Adrenal gland (tissue), 19 donors: ENCODE measurements at regions of chr20 and their contacts with region 1.

Region 1: DNA sequence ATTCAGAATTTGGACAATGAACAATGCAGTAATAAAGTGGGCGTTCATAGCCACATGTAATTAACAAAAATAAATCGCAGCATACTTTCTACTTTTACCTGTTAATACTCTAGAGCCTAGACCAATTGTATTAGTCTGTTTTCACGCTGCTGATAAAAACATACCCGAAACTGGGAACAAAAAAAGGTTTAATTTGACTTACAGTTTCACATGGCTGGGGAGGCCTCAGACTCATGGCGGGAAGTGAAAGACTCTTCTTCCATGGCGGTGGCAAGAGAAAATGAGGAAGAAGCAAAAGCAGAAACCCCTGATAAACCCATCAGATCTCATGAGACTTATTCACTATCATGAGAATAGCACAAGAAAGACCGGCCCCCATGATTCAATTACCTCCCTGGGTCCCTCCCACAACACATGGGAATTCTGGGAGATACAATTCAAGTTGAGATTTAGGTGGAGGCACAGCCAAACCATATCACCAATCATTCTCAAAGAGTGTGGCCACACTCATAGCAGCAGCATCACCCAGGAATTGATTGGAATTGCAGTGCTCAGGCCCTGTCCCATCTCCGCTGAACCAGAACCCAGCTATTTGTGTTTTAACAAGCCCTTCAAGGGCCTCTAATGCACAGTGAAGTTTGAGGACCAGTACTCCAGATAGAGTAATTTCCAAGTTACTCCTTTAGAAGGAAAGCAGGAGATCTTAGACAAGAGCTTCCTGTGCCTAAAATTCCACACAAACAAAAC is 650.0 kb downstream of the KIF16B start:
- DNase-seq: peak in 1 of 7 donors; percentile 4
- H3K4me3 ChIP-seq: no peak overlapping the region
- H3K27ac ChIP-seq: no peak overlapping the region
- H3K4me1 ChIP-seq: no peaks in the 10 kb centered on the region
- H3K27me3 ChIP-seq: no peaks in the 10 kb centered on the region
- CTCF ChIP-seq: no peak
- POLR2A ChIP-seq: no peak

Region 2: DNA sequence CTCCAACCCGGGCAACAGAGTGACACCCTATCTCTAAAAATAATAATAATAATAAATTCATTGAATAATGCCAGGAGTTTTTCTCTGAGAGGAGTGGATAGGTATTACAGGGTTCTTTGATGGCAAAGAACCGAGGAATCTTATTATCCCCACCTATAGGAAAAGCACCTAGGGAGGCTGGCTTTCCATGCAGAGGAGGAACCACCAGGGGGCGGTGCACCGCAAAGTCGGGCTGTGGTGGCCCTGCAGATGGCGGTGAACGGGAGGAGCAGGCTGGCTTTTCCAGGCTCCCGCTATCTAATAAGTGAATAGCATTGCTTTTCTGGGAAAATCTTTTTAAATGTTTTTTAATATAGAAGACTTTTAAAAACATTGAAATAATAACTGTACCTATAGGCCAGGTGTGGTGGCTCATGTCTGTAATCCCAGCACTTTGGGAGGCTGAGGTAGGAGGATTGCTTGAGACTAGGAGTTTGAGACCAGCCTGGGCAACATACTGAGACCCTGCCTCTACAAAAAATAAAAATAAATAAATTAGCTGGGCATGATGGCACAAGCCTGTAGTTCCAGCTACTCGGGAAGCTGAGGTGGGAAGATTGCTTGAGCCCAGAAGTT is 214.1 kb before region 1 on chr20:
- intact Hi-C with region 1: loop called in 1 of 2 experiments (anchors 10 kb)
- DNase-seq: peak; percentile 55 to 80 (median 64)
- H3K4me3 ChIP-seq: no peak overlapping the region
- H3K27ac ChIP-seq: no peak overlapping the region
- H3K4me1 ChIP-seq: no peaks in the 10 kb centered on the region
- H3K27me3 ChIP-seq: no peaks in the 10 kb centered on the region
- CTCF ChIP-seq: peak; percentile 38 to 65 (median 62)
- POLR2A ChIP-seq: no peak

Region 3: DNA sequence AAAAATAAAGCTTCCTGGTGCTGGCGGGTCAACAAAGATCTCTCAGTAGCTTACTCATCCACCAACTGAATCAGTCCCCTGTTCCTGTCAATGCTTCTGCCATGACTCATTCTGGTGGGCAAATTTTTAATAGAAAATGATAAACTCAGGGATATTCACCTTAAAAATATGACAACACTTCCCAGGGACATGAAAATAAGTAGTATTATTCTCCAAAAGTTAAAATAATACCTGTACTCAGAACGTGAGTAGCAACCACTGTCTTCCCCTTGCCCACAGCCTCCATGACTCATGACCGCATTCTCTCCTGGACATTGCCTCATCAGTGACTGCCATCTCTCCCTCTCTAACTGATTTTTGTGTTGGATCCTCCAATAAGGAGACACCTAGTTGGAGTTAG is 97.8 kb after region 1 on chr20:
- intact Hi-C with region 1: no loop called
- DNase-seq: no peak
- H3K4me3 ChIP-seq: no peak overlapping the region
- H3K27ac ChIP-seq: no peak overlapping the region
- H3K4me1 ChIP-seq: no peaks in the 10 kb centered on the region
- H3K27me3 ChIP-seq: no peaks in the 10 kb centered on the region
- CTCF ChIP-seq: no peak
- POLR2A ChIP-seq: no peak